Psoas muscle (tissue), 8 donors: ENCODE measurements at regions of chr19 and their contacts with region 1.

Region 1: GRCh38 chr19:43503501-43504425 is 783 bp downstream of the PHLDB3 start:
- DNase-seq: peak; percentile 97 to 98
- ATAC-seq: peak; percentile 99 to 100 (median 99)
- H3K4me3 ChIP-seq: peak overlapping the region; percentile 79
- H3K27ac ChIP-seq: peak overlapping the region; percentile 75
- H3K4me1 ChIP-seq: peaks cover 11% of the 10 kb centered on the region
- H3K27me3 ChIP-seq: no peaks in the 10 kb centered on the region
- CTCF ChIP-seq: no peak

Region 2: DNA sequence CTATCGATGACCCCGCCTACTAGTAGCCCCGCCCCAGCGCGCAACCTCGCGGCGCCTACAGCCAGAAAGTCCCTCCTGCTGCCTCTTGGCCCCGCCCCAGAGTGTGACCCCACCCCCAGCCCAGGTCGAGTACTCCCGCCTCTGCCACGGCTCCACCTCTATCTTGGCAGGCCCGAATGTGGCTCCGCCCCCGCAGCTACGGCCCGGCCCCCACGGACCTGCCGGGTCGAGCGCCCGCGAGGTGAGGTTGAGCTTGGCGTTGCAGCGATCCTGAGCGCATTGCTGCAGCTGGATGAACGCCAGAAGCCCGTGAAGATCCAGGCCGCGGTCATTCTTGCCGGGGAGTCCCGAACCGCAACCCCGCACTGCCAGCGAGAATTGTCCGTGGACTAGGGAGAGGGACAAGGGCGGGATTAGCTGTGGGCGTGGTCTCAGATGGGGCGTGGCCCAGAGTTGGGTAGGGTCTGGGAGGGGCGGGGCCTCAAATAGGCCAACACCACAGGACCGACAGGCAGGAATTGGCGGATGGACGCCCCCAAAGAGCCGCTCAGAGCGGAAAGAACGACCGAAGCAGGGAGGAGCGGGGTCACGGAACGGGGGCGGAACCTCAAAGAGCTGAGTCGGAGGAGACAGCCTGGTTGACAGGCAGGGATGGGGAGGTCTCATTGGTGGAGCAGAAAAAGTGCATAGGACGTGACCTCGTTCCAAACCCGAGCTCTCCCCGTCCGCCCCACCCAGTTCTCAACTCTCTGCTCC is 40.2 kb before region 1 on chr19:
- intact Hi-C with region 1: loop called (anchors 5 kb)
- DNase-seq: peak; percentile 95 to 96
- ATAC-seq: peak; percentile 92 to 94 (median 92)
- H3K4me3 ChIP-seq: peak overlapping the region; percentile 82
- H3K27ac ChIP-seq: peak overlapping the region; percentile 64
- H3K4me1 ChIP-seq: peaks cover 3% of the 10 kb centered on the region
- H3K27me3 ChIP-seq: peaks cover 0 to 17% (median 9%) of the 10 kb centered on the region in 3 donors
- CTCF ChIP-seq: no peak

Region 3: GRCh38 chr19:43575156-43575950 is 71.6 kb after region 1 on chr19 and contains the starts of genes PINLYP and XRCC1:
- intact Hi-C with region 1: no loop called
- DNase-seq: peak; percentile 98 to 99
- ATAC-seq: peak; percentile 100
- H3K4me3 ChIP-seq: peak within 1 kb of the TSS; percentile 97
- H3K27ac ChIP-seq: peak within 1 kb of the TSS; percentile 86
- H3K4me1 ChIP-seq: peaks cover 12% of the 10 kb centered on the region
- H3K27me3 ChIP-seq: no peaks in the 10 kb centered on the region
- CTCF ChIP-seq: no peak
- total RNA-seq, gene PINLYP: 0.66 to 1.1 (median 0.86) TPM in 3 of 4 donors, not detected in the other
- total RNA-seq, gene XRCC1: 12.7 to 22.1 (median 14.8) TPM